GM10248 (cell line): ENCODE measurements at regions of chr5 and their contacts with region 1.

Region 1: DNA sequence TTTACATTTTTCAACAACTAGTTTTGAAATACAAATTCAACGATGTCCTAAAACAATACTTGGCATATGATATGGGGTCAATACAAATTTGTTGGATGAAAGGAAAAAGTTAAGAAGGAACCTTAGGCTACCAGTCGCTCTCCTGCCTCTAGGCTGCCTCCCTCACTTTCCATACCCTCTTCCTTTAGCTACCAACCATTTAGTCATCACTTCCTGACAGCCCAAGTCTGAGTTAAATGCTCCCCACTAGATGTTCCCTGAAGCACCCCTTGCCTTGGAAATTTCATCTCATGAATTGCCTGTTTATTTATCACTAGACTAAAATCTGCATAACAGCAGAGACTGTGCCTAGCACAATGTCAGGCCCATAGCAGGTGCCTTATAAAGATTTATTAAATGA is 2.7 kb upstream of the LARS1 start:
- DNase-seq: no peak
- CTCF ChIP-seq: no peak

Region 2: DNA sequence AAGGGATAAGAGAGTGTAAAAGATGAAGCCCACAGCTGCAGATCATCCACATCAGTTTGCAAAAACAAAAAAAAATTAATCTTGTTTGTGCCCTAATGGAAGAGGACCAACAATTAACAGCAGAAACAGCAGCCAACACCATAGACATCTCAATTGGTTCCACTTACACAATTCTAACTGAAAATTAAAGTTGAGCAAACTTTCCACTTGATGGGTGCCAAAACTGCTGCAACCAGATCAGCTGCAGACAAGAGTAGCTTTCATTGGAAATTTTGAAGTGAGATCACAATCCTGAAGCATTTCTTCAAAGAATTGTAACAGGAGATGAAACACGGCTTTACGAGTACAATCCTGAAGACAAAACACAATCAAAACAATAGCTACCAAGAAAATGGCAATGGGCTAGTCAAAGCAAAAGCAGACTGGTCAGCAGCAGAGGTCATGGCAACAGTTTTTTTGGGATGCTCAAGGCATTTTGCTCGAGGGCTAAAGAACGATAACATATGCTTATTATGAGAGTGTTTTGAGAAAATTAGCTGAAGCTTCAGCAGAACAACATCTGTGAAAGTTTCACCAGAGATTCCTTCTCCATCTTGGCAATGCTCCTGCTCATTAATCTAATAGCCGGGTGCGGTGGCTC is 14.1 kb after region 1 on chr5:
- CTCF ChIA-PET with region 1: interaction called, 10 read pairs
- POLR2A ChIA-PET with region 1: interaction called, 7 read pairs
- DNase-seq: no peak
- CTCF ChIP-seq: no peak

Region 3: GRCh38 chr5:146223179-146223578 is 38.0 kb after region 1 on chr5:
- CTCF ChIA-PET with region 1: no interaction called
- POLR2A ChIA-PET with region 1: no interaction called
- DNase-seq: no peak
- CTCF ChIP-seq: no peak